ENCODE measurements at regions of chr9 and their contacts with region 1.

Region 1: GRCh38 chr9:85716031-85716877 is 25.5 kb downstream of the AGTPBP1 start:
- DNase-seq: no peak
- ATAC-seq: no peak
- H3K4me3 ChIP-seq: no peak overlapping the region
- H3K27ac ChIP-seq: no peak overlapping the region
- H3K4me1 ChIP-seq: no peaks in the 10 kb centered on the region
- H3K27me3 ChIP-seq: no peaks in the 10 kb centered on the region
- CTCF ChIP-seq: no peak
- POLR2A ChIP-seq: no peak
- RAD21 ChIP-seq: no peak

Region 2: DNA sequence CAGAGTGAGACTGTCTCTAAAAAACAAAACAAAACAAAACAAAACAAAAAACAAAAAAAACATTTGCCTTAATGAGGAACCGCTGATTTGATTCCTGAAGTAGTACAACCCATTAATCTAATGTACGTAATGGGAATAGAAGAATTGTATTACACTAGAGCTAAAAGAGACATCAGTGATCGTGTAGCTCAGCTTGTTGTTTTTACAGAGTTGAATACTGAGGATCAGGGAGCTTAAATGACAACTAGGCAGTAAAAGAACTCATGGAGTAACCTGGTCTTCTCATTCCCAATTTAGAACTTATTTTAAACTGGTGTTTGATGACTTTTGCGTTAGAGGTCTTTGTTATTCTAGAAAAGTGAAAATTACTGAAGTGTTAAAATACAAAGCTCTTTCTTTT is 1310.6 kb before region 1 on chr9:
- CTCF ChIA-PET with region 1: interaction called, 11 read pairs
- POLR2A ChIA-PET with region 1: no interaction called
- dilution Hi-C with region 1: no loop called
- in situ Hi-C with region 1: no loop called
- intact Hi-C with region 1: no loop called
- DNase-seq: no peak
- ATAC-seq: no peak
- H3K4me3 ChIP-seq: no peak overlapping the region
- H3K27ac ChIP-seq: no peak overlapping the region
- H3K4me1 ChIP-seq: no peaks in the 10 kb centered on the region
- H3K27me3 ChIP-seq: no peaks in the 10 kb centered on the region
- CTCF ChIP-seq: no peak
- POLR2A ChIP-seq: no peak
- RAD21 ChIP-seq: no peak

Region 3: DNA sequence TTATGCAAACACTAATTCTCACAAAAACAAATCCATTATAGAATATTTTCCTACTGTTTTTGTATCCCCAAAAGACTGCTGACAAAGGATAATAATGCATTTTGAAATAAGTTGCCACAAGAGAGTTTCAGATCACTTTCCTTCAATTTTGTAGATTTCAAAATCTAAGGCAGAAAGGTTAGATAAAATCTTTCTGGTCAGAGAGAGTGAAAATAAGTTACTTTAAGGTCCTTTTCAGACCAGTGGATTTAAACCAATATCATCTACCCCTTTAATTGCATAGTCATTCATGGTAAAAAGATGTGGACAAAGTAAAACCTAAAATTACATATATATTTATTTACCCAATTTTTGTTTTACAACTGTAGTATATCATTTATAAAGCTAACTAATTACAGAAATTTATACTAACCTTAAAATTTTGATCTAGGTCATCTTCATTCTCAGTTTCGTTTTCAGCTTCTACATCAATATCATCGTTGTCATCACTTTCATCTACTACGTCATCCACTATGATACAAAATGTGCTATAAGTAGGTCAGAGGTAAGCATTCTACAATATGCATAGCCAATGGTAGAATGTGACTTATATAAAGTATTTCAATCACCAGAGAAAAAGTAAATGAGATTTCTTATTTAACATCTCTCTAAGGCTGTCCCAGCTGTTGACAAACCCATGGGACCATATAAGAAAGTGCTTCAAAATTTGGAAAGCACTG is 70.2 kb before region 1 on chr9:
- CTCF ChIA-PET with region 1: no interaction called
- POLR2A ChIA-PET with region 1: no interaction called
- dilution Hi-C with region 1: no loop called
- in situ Hi-C with region 1: no loop called
- intact Hi-C with region 1: no loop called
- DNase-seq: no peak
- ATAC-seq: no peak
- H3K4me3 ChIP-seq: no peak overlapping the region
- H3K27ac ChIP-seq: no peak overlapping the region
- H3K4me1 ChIP-seq: no peaks in the 10 kb centered on the region
- H3K27me3 ChIP-seq: no peaks in the 10 kb centered on the region
- CTCF ChIP-seq: no peak
- POLR2A ChIP-seq: no peak
- RAD21 ChIP-seq: no peak

Region 4: DNA sequence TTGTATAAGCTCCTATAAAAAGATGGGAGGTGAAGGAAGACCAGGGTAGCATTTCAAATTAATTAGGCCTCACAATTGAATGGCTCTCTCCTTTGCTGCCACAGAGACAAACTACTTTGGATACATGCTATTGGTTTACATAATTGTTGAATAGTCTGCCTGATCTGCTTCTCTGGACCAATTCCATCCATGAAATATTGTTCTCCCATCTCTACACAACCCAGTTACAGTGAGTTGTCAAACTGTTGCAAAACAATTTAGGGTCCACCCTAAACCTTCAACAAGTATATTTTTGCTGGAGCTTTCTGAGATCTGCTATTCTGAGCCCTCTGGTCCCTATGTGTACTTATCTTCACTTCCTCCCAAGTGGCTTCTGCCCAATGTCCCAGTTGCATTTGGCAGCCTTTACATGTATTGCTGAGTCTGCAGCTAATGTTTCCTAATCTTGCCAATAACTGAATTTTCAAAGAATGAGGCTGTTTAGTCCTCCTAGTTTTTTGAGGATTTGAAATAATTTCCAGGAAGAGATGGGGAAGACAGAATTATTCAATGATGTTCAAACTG is 13.4 kb before region 1 on chr9:
- CTCF ChIA-PET with region 1: interaction called, 3 read pairs
- POLR2A ChIA-PET with region 1: interaction called, 11 read pairs
- dilution Hi-C with region 1: no loop called
- in situ Hi-C with region 1: no loop called
- intact Hi-C with region 1: no loop called
- DNase-seq: no peak
- ATAC-seq: no peak
- H3K4me3 ChIP-seq: no peak overlapping the region
- H3K27ac ChIP-seq: no peak overlapping the region
- H3K4me1 ChIP-seq: no peaks in the 10 kb centered on the region
- H3K27me3 ChIP-seq: no peaks in the 10 kb centered on the region
- CTCF ChIP-seq: no peak
- POLR2A ChIP-seq: no peak
- RAD21 ChIP-seq: no peak

Measured in IMR-90 (cell line).